ENCODE measurements at regions of chr13 and their contacts with region 1.

Region 1: DNA sequence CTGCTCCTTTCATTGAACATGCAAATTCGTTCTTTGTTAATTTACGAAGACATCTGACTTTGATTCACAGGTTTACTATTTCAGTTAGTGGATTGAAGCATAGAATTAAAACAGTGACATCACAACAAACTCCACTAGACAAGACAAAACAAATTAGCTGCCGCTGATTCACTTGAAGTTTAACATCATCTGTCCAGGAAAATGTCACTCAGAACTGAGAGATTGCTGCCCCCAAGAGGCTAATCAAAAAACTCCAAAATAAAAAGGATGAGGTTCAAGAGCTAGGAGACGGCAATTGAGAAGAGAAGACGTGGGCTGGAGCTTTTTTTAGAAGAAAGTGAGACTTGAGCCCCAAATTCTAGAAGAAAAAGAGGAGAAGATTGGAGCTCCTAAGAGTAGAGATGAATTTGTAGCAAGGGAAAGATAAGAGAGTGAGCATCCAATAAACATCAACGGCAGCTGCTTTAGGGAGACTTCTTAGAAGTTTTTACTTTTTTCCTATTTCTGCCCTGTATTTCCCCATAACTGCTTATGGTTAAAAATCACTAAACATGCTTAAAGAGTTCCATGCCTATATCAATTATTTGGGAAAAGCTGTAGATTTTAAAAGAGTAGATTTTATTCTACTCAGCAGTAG is 40.8 kb upstream of the TPP2 start:
- DNase-seq: no peak
- H3K4me3 ChIP-seq: no peak overlapping the region
- H3K27me3 ChIP-seq: no peaks in the 10 kb centered on the region
- CTCF ChIP-seq: peak; percentile 53

Region 2: DNA sequence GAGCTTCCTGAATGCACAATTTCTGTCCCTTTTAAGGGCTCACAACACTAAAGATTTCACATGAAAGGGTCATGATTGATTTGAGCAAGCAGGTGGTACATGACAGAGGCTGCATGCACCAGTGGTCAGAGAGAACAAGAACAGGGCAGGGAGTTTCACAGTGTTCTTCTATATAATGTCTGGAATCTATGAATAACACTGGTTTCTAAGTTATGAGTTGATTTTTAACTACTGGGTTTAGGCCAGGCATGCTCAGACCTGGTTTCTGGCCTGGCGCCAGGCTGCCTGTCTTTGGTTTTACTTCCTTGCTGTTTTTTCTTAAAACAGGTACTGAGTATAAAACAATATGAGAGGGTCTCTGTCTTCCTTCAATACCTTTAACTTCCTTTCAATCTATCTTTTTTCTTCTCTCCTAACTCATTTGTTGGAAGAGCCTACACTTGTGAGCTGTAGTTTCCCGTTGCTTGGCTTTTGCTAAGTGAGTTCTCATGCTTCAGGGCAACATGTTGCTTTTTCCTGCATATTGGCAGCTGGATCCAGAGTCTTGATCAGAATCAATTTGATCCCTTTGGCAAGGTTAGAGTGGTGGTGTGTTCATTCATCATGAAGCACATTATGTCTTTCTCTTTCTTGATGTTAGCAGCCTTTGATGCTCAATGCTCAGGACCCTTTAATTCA is 115.6 kb before region 1 on chr13:
- CTCF ChIA-PET with region 1: no interaction called
- POLR2A ChIA-PET with region 1: no interaction called
- DNase-seq: no peak
- H3K4me3 ChIP-seq: no peak overlapping the region
- H3K27me3 ChIP-seq: no peaks in the 10 kb centered on the region
- CTCF ChIP-seq: no peak

Region 3: GRCh38 chr13:102571075-102571474 is 15.0 kb after region 1 on chr13:
- CTCF ChIA-PET with region 1: interaction called, 10 read pairs
- POLR2A ChIA-PET with region 1: no interaction called
- DNase-seq: no peak
- H3K4me3 ChIP-seq: no peak overlapping the region
- H3K27me3 ChIP-seq: peaks cover 6% of the 10 kb centered on the region
- CTCF ChIP-seq: no peak

Region 4: DNA sequence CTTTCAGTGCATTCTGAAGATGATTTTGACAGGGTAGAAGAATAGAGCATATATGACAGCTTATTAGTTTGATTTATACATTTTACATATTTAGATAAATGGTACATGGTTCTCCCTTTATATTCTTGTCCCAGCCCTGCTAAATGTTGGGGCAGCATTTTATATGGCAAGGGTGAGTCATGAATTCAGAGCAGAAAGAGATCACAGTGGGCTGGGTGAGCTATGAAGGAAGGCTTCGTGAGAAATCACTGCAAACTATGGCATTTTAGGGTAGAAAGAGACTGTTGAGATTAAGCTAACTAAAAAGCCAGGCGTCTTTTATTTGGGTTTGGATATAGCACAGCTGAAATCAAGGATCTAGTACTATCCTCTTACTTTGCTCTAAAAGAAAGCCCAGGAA is 162.7 kb after region 1 on chr13:
- CTCF ChIA-PET with region 1: no interaction called
- POLR2A ChIA-PET with region 1: no interaction called
- DNase-seq: no peak
- H3K4me3 ChIP-seq: no peak overlapping the region
- H3K27me3 ChIP-seq: no peaks in the 10 kb centered on the region; the same call in none of the 2 replicates
- CTCF ChIP-seq: no peak